B cell (primary cell): ENCODE measurements at regions of chrX and their contacts with region 1.

Region 1: GRCh38 chrX:150547375-150548115 is 20.9 kb upstream of the MTM1 start:
- DNase-seq: peak; percentile 39
- ATAC-seq: peak; percentile 78
- H3K4me3 ChIP-seq: peak overlapping the region in 4 of 5 experiments; percentile 46 to 61 (median 48)
- H3K4me3 Mint-ChIP-seq: peak overlapping the region; percentile 87
- H3K27ac ChIP-seq: no peak overlapping the region
- H3K27ac Mint-ChIP-seq: peak overlapping the region; percentile 81
- H3K4me1 ChIP-seq: peaks cover 23 to 41% of the 10 kb centered on the region in 2 donors
- H3K4me1 Mint-ChIP-seq: peaks cover 32% of the 10 kb centered on the region
- H3K27me3 ChIP-seq: no peaks in the 10 kb centered on the region
- H3K27me3 Mint-ChIP-seq: no peaks in the 10 kb centered on the region
- CTCF ChIP-seq: no peak

Region 2: DNA sequence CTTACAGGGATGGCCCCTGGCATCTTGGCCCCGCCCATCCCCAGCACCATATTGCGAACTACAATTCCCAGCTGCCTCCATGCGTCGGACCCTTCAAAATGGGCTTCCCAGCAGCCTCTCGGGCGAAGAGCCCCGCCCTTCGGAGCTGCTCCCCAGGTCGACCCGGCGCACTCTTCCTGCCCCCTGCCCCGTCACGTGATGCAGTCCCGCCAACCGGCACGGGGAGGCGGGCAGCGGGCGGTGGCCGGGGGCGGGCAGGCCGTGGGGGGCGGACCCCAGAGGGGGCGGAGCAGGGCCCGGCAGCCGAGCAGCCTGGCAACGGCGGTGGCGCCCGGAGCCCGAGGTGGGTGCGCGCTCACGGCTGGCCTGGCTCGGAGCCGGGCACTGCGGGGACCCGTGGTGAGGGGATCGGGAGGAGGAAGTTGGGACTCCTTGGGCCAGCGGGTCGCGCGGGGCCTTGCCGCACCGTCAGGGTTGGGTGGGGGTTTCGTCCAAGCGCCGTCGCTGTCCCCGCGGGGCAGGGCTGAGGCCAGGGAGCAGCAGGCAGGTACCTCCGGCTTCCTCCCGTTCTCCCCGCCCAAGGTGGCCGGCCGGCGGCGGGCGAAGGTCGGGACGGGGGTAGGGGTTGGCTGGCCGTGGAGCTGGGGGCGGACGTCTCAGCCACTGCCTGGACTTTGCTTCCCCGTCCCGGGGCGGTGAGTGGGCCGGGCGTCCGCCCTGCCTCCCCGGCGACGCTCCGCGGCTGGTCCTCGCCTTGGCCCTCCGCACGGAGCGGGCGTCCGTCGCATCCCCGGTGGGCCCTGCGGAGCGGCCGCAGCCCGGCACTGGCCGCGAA is 21.0 kb after region 1 on chrX and contains the start of gene MTM1:
- CTCF ChIA-PET with region 1: interaction called, 4 read pairs
- POLR2A ChIA-PET with region 1: interaction called, 9 read pairs
- intact Hi-C with region 1: loop called (anchors 2 kb)
- DNase-seq: peak; percentile 93
- ATAC-seq: peak; percentile 90
- H3K4me3 ChIP-seq: peak within 1 kb of the TSS; percentile 35 to 77 (median 75)
- H3K4me3 Mint-ChIP-seq: peak within 1 kb of the TSS; percentile 93
- H3K27ac ChIP-seq: peak within 1 kb of the TSS; percentile 80 to 84
- H3K27ac Mint-ChIP-seq: peak within 1 kb of the TSS; percentile 95
- H3K4me1 ChIP-seq: peaks cover 40 to 44% of the 10 kb centered on the region in 2 donors
- H3K4me1 Mint-ChIP-seq: peaks cover 45% of the 10 kb centered on the region
- H3K27me3 ChIP-seq: no peaks in the 10 kb centered on the region
- H3K27me3 Mint-ChIP-seq: no peaks in the 10 kb centered on the region
- CTCF ChIP-seq: no peak
- total RNA-seq, gene MTM1: 24.2 and 29.8 TPM in 2 replicates

Region 3: GRCh38 chrX:150833454-150834056 is 286.0 kb after region 1 on chrX:
- CTCF ChIA-PET with region 1: no interaction called
- POLR2A ChIA-PET with region 1: no interaction called
- intact Hi-C with region 1: no loop called
- DNase-seq: no peak
- ATAC-seq: no peak
- H3K4me3 ChIP-seq: no peak overlapping the region
- H3K4me3 Mint-ChIP-seq: no peak overlapping the region
- H3K27ac ChIP-seq: no peak overlapping the region
- H3K27ac Mint-ChIP-seq: no peak overlapping the region
- H3K4me1 ChIP-seq: no peaks in the 10 kb centered on the region
- H3K4me1 Mint-ChIP-seq: no peaks in the 10 kb centered on the region
- H3K27me3 ChIP-seq: no peaks in the 10 kb centered on the region
- H3K27me3 Mint-ChIP-seq: no peaks in the 10 kb centered on the region
- CTCF ChIP-seq: no peak